IMR-90 (cell line): ENCODE measurements at regions of chr9 and their contacts with region 1.

Region 1: DNA sequence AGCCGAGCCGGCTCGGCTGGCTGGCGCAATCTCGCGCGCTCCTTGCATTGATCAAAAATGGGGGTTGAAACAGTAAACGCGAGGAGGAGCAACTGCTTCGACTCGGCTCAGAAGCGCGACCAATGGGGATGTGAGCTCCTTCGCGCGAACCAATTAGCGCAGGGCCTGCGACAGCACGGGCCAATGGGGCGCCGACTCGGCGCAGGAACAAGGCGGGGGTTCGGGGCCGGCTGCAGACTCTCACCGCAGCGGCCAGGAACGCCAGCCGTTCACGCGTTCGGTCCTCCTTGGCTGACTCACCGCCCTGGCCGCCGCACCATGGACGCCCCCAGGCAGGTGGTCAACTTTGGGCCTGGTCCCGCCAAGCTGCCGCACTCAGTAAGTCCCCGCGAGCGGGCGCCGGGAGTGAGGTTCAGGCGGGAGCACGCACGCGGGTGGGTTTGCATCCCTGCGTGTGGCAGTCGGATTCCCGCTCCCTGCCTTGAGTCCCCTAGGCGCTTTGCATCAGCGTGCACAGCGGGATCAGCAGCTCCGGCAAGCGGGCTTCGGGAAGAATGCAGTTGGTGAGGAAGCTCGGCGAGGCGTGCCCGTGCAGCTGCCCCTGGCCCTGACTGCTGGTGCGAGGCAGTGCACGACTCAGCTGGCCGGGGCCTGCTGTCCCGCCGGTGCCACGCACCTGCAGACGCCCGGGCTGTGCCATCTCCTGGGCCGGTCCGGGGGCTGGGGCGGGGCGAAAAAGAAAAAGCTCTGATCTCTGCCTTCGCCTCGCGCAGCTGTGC is at the start of gene PSAT1:
- DNase-seq: peak; percentile 98
- ATAC-seq: peak; percentile 97
- H3K4me3 ChIP-seq: peak within 1 kb of the TSS; percentile 75
- H3K27ac ChIP-seq: peak within 1 kb of the TSS; percentile 82
- H3K4me1 ChIP-seq: peaks cover 3% of the 10 kb centered on the region; the same call in 1 of the 2 replicates
- H3K27me3 ChIP-seq: no peaks in the 10 kb centered on the region
- CTCF ChIP-seq: peak; percentile 3; the same call in 1 of the 2 replicates
- POLR2A ChIP-seq: peak; percentile 18; the same call in 1 of the 2 replicates
- RAD21 ChIP-seq: no peak
- total RNA-seq, gene PSAT1: 88.4 and 98.9 TPM in 2 replicates

Region 2: DNA sequence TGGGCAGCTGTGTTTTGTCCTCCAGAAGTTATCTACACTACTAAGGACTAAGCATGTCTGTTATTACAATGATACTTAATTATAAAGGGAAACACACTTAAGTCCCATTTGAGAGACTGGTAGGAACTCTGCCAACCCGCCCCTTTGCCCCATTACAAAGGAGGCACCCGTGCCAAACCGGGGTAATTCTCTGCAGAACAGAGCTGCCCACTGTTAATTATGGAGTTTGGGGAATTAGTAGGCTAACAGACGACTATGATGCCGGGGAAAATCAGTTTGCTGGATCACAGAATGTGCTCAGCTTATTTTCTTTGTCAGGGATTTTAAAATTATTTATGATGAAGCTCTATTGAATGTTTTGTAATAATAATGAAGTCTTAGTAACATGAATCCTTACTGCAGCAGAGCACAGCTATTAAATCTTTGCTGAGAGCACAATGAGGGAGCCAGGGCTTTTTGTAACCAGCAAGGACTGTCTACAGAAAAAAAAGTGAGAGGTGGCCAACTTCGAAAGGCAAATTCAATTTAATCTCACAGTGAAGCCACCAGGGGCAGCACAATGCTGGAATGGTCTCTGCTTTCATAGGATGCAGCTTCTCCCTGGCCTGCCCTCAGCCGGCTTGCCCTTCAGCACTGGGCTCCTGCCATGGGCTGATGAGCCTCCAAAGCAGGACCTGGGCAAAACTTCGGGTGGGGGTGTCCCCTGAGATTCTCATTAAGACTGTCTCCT is 400.0 kb before region 1 on chr9:
- CTCF ChIA-PET with region 1: no interaction called
- POLR2A ChIA-PET with region 1: interaction called, 10 read pairs
- dilution Hi-C with region 1: no loop called
- in situ Hi-C with region 1: no loop called
- intact Hi-C with region 1: no loop called
- DNase-seq: peak; percentile 15
- ATAC-seq: peak; percentile 16; the same call in 1 of the 2 replicates
- H3K4me3 ChIP-seq: no peak overlapping the region
- H3K27ac ChIP-seq: no peak overlapping the region
- H3K4me1 ChIP-seq: peaks cover 8% of the 10 kb centered on the region
- H3K27me3 ChIP-seq: no peaks in the 10 kb centered on the region
- CTCF ChIP-seq: peak; percentile 30; the same call in 1 of the 2 replicates
- POLR2A ChIP-seq: no peak
- RAD21 ChIP-seq: no peak

Region 3: GRCh38 chr9:78167356-78167755 is 129.7 kb before region 1 on chr9:
- CTCF ChIA-PET with region 1: no interaction called
- POLR2A ChIA-PET with region 1: no interaction called
- dilution Hi-C with region 1: no loop called
- in situ Hi-C with region 1: no loop called
- intact Hi-C with region 1: no loop called
- DNase-seq: no peak
- ATAC-seq: no peak
- H3K4me3 ChIP-seq: no peak overlapping the region
- H3K27ac ChIP-seq: no peak overlapping the region
- H3K4me1 ChIP-seq: no peaks in the 10 kb centered on the region
- H3K27me3 ChIP-seq: no peaks in the 10 kb centered on the region; the same call in 1 of the 2 replicates
- CTCF ChIP-seq: no peak
- POLR2A ChIP-seq: no peak
- RAD21 ChIP-seq: no peak

Region 4: GRCh38 chr9:78235756-78236538 is 61.1 kb before region 1 on chr9 and contains the start of gene CEP78:
- CTCF ChIA-PET with region 1: no interaction called
- POLR2A ChIA-PET with region 1: no interaction called
- dilution Hi-C with region 1: no loop called
- in situ Hi-C with region 1: no loop called
- intact Hi-C with region 1: loop called (anchors 2 kb)
- DNase-seq: peak; percentile 92
- ATAC-seq: peak; percentile 96
- H3K4me3 ChIP-seq: peak within 1 kb of the TSS; percentile 90
- H3K27ac ChIP-seq: peak within 1 kb of the TSS; percentile 71
- H3K4me1 ChIP-seq: peaks cover 5% of the 10 kb centered on the region; the same call in 1 of the 2 replicates
- H3K27me3 ChIP-seq: no peaks in the 10 kb centered on the region
- CTCF ChIP-seq: no peak
- POLR2A ChIP-seq: peak; percentile 51; the same call in 1 of the 2 replicates
- RAD21 ChIP-seq: no peak
- total RNA-seq, gene CEP78: 18.3 and 21.4 TPM in 2 replicates

Region 5: DNA sequence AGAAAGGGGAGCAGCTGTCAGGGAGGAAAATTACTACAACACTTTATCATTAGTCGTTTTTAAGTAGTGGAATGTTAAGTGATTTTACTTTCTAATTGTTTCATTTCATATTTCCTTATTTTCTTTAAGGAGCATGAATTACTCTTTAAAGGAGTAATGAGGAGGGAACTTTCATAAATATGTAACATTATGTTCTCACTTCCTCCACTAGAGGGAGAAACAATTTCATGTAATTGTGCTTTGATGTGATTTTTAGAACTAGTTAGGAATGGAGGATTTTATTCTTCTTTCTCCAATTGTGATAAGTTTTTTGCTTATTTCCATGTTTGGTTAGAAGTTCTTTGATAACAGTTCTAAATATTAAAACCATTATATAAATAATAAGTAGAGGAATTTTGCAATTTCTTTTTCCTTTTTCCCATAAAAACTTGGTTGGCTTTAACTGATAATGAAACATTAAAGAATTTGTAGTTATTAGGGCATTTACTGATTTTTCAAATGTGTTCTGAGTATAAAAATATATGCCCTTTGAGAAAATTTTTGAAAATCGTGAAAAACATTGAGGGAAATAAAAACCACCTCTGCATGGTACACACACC is 35.6 kb before region 1 on chr9:
- CTCF ChIA-PET with region 1: no interaction called
- POLR2A ChIA-PET with region 1: no interaction called
- dilution Hi-C with region 1: no loop called
- in situ Hi-C with region 1: no loop called
- intact Hi-C with region 1: loop called (anchors 1 kb)
- DNase-seq: peak; percentile 55
- ATAC-seq: peak; percentile 78
- H3K4me3 ChIP-seq: no peak overlapping the region
- H3K27ac ChIP-seq: no peak overlapping the region
- H3K4me1 ChIP-seq: no peaks in the 10 kb centered on the region
- H3K27me3 ChIP-seq: no peaks in the 10 kb centered on the region
- CTCF ChIP-seq: peak; percentile 63
- POLR2A ChIP-seq: no peak
- RAD21 ChIP-seq: peak; percentile 55

Region 6: GRCh38 chr9:78280982-78281668 is 16.0 kb before region 1 on chr9:
- CTCF ChIA-PET with region 1: interaction called, 3 read pairs
- POLR2A ChIA-PET with region 1: interaction called, 4 read pairs
- dilution Hi-C with region 1: no loop called
- in situ Hi-C with region 1: no loop called
- intact Hi-C with region 1: loop called (anchors 1 kb)
- DNase-seq: peak; percentile 75
- ATAC-seq: peak; percentile 72
- H3K4me3 ChIP-seq: no peak overlapping the region
- H3K27ac ChIP-seq: no peak overlapping the region; the same call in 1 of the 2 replicates
- H3K4me1 ChIP-seq: peaks cover 6% of the 10 kb centered on the region
- H3K27me3 ChIP-seq: no peaks in the 10 kb centered on the region
- CTCF ChIP-seq: no peak
- POLR2A ChIP-seq: no peak
- RAD21 ChIP-seq: no peak